Activated CD4-positive, alpha-beta T cell treated with anti-CD3 and anti-CD28 coated beads for 36 hours (primary cell): ENCODE measurements at regions of chr4 and their contacts with region 1.

Region 1: DNA sequence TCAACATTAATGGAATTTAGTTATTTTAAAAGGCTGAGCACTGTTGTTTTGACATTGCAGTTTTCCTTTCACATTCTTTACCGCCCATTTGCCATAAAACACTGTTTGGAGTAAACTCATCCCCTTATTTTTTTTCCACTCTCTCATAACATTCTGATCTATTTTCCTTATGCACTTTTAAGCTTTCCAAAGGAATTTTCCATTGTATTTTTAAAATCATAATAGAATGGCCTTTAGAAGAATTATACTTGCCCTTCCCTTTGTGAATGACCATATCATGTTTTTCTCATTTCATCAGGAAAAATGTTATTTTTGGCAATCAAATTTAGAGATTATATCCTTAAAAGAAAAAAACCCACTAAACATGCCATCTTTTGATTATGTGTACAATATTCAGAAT is 1074.2 kb downstream of the STIM2 start:
- DNase-seq: no peak
- ATAC-seq: no peak
- H3K4me3 Mint-ChIP-seq: no peak overlapping the region
- H3K27ac Mint-ChIP-seq: no peak overlapping the region
- H3K4me1 Mint-ChIP-seq: no peaks in the 10 kb centered on the region
- H3K27me3 Mint-ChIP-seq: no peaks in the 10 kb centered on the region

Region 2: DNA sequence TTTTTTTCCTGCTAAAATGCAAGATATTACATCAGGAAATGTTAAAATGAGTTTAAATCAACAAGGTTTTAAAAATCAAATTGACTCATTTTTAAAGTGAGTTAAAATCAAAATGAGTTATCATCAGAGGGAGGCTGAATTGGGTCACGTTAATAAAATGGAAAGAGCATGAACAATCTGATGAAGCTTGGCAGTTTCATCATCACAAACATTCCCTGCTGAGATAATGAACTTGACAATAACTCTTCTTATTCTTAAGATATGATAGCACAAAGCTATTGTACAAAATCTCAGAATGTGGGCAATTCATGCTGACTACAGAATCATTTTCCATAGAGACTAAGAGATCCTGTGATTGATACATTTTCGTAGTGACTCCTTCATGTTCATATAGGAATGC is 12.4 kb after region 1 on chr4:
- CTCF ChIA-PET with region 1: no interaction called
- POLR2A ChIA-PET with region 1: no interaction called
- intact Hi-C with region 1: loop called in 1 of 2 experiments (anchors 1 kb)
- DNase-seq: no peak
- ATAC-seq: no peak
- H3K4me3 Mint-ChIP-seq: no peak overlapping the region
- H3K27ac Mint-ChIP-seq: no peak overlapping the region
- H3K4me1 Mint-ChIP-seq: no peaks in the 10 kb centered on the region
- H3K27me3 Mint-ChIP-seq: no peaks in the 10 kb centered on the region